B cell (primary cell): ENCODE measurements at regions of chr11 and their contacts with region 1.

Region 1: GRCh38 chr11:110199184-110199941 is 97.1 kb downstream of the RDX start:
- DNase-seq: no peak
- ATAC-seq: no peak
- H3K4me3 ChIP-seq: no peak overlapping the region
- H3K4me3 Mint-ChIP-seq: no peak overlapping the region
- H3K27ac ChIP-seq: no peak overlapping the region
- H3K27ac Mint-ChIP-seq: no peak overlapping the region
- H3K4me1 ChIP-seq: no peaks in the 10 kb centered on the region
- H3K4me1 Mint-ChIP-seq: no peaks in the 10 kb centered on the region
- H3K27me3 ChIP-seq: peaks cover 0 to 16% (median 11%) of the 10 kb centered on the region in 4 experiments
- H3K27me3 Mint-ChIP-seq: peaks cover 38% of the 10 kb centered on the region
- CTCF ChIP-seq: no peak

Region 2: DNA sequence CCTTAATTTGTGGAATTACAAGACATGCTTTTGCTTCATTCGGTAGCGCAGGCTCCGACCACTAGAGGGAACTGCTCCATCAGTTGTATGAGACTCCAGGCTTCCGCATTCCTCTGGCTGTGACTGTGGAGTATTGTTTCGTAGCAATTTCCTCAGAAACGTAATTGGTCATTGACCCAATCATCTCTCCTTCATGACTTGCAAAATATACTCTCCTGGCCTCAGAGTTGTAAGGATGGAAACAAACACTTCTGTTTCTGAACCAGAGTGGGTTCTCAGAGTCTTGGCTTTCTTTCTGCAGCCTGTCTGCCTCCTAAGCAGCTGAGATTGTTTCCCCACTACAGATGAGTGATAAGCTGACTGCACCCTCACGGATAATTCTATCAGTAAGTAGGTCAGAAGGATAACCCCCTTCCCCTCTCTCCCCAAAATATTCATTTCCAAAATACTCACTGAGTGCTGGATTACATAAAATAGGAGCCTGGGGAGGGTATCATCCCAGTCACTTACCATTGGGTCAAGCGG is 253.0 kb before region 1 on chr11:
- CTCF ChIA-PET with region 1: interaction called, 9 read pairs
- POLR2A ChIA-PET with region 1: no interaction called
- intact Hi-C with region 1: loop called (anchors 5 kb)
- DNase-seq: peak; percentile 79
- ATAC-seq: peak; percentile 92
- H3K4me3 ChIP-seq: peak overlapping the region in 3 of 5 experiments; percentile 25 to 50 (median 34)
- H3K4me3 Mint-ChIP-seq: peak overlapping the region; percentile 71
- H3K27ac ChIP-seq: no peak overlapping the region
- H3K27ac Mint-ChIP-seq: no peak overlapping the region
- H3K4me1 ChIP-seq: peaks cover 6 to 9% of the 10 kb centered on the region in 2 donors
- H3K4me1 Mint-ChIP-seq: peaks cover 7% of the 10 kb centered on the region
- H3K27me3 ChIP-seq: peaks cover 0 to 16% (median 1%) of the 10 kb centered on the region in 4 experiments
- H3K27me3 Mint-ChIP-seq: peaks cover 13% of the 10 kb centered on the region
- CTCF ChIP-seq: peak; percentile 88

Region 3: GRCh38 chr11:110019675-110020074 is 179.7 kb before region 1 on chr11:
- CTCF ChIA-PET with region 1: no interaction called
- POLR2A ChIA-PET with region 1: no interaction called
- intact Hi-C with region 1: no loop called
- DNase-seq: no peak
- ATAC-seq: no peak
- H3K4me3 ChIP-seq: no peak overlapping the region
- H3K4me3 Mint-ChIP-seq: no peak overlapping the region
- H3K27ac ChIP-seq: no peak overlapping the region
- H3K27ac Mint-ChIP-seq: no peak overlapping the region
- H3K4me1 ChIP-seq: no peaks in the 10 kb centered on the region
- H3K4me1 Mint-ChIP-seq: no peaks in the 10 kb centered on the region
- H3K27me3 ChIP-seq: peaks cover 0 to 42% (median 39%) of the 10 kb centered on the region in 4 experiments
- H3K27me3 Mint-ChIP-seq: peaks cover 64% of the 10 kb centered on the region
- CTCF ChIP-seq: no peak

Region 4: GRCh38 chr11:110362971-110363509 is 163.7 kb after region 1 on chr11:
- CTCF ChIA-PET with region 1: interaction called, 71 read pairs
- POLR2A ChIA-PET with region 1: no interaction called
- intact Hi-C with region 1: loop called (anchors 1 kb)
- DNase-seq: no peak
- ATAC-seq: no peak
- H3K4me3 ChIP-seq: no peak overlapping the region
- H3K4me3 Mint-ChIP-seq: no peak overlapping the region
- H3K27ac ChIP-seq: no peak overlapping the region
- H3K27ac Mint-ChIP-seq: no peak overlapping the region
- H3K4me1 ChIP-seq: no peaks in the 10 kb centered on the region
- H3K4me1 Mint-ChIP-seq: no peaks in the 10 kb centered on the region
- H3K27me3 ChIP-seq: no peaks in the 10 kb centered on the region
- H3K27me3 Mint-ChIP-seq: peaks cover 5% of the 10 kb centered on the region
- CTCF ChIP-seq: no peak

Region 5: DNA sequence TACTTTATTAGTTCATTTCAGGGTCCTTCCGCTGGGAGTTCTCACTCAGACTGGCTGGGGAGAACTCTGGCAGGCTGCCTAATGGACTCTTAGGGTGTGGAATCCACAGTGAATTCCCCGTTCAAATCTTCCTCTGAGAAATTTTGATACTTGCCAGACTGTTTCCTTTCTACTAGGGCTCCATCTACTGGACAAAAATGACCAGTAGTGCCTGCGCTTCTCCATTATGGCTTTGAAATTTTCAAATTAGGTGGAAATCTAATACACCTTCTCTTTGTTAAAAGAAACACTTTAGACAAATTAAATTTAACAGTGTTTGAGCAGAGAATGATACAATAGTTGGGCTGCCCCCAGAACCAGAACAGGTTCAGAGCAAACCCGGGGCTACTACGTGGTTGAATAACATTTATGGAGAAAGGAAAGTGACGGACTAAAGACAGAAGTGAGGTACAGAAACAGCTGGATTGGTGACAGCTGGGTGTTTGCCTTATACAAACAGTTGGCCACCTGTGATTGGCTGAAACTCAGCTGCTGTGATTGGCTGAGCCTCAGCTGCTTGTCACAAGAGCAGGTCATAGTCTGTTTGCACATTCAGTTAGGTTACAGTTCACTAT is 177.5 kb after region 1 on chr11:
- CTCF ChIA-PET with region 1: interaction called, 52 read pairs
- POLR2A ChIA-PET with region 1: no interaction called
- intact Hi-C with region 1: loop called (anchors 1 kb)
- DNase-seq: peak; percentile 61
- ATAC-seq: peak; percentile 28
- H3K4me3 ChIP-seq: no peak overlapping the region
- H3K4me3 Mint-ChIP-seq: peak overlapping the region; percentile 35
- H3K27ac ChIP-seq: no peak overlapping the region
- H3K27ac Mint-ChIP-seq: no peak overlapping the region
- H3K4me1 ChIP-seq: peaks cover 0 to 3% of the 10 kb centered on the region in 2 donors
- H3K4me1 Mint-ChIP-seq: no peaks in the 10 kb centered on the region
- H3K27me3 ChIP-seq: peaks cover 0 to 3% (median 0%) of the 10 kb centered on the region in 4 experiments
- H3K27me3 Mint-ChIP-seq: peaks cover 3% of the 10 kb centered on the region
- CTCF ChIP-seq: peak; percentile 80

Region 6: DNA sequence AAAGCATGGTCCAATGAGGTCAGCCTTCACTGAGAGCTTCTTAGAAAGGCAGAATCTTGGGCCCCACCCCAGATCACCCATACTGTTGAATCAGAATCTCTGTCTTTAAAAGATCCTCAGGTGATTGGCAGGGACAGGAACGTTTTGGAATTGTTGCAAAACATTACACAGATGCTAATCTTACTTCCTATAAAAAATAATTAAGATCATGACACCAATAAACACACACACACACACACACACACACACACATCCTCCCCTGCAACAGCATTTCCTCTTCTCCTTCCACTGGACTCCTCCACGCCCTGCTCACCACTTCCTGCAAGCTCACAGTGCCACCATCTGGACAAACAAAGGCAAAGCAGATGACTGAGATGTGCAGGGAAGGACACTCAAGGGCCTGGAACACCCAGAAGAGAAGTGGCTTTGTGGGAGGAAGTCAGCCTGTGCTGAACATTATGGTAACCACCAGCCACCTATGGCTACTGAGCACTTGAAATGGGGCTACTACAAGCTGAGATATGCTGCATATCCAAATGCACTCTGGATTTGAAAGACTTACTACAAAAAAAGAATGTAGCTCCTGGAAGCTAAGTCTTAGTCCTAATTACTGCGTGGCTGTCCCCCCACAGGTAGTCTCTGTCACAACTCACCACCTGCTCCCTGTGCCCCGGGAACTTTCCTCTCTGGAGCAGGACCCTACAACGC is 1247.2 kb after region 1 on chr11:
- CTCF ChIA-PET with region 1: interaction called, 10 read pairs
- POLR2A ChIA-PET with region 1: no interaction called
- intact Hi-C with region 1: loop called (anchors 1 kb)
- DNase-seq: peak; percentile 94
- ATAC-seq: peak; percentile 98
- H3K4me3 ChIP-seq: no peak overlapping the region
- H3K4me3 Mint-ChIP-seq: peak overlapping the region; percentile 1
- H3K27ac ChIP-seq: no peak overlapping the region
- H3K27ac Mint-ChIP-seq: peak overlapping the region; percentile 28
- H3K4me1 ChIP-seq: peaks cover 31 to 35% of the 10 kb centered on the region in 2 donors
- H3K4me1 Mint-ChIP-seq: peaks cover 37% of the 10 kb centered on the region
- H3K27me3 ChIP-seq: no peaks in the 10 kb centered on the region
- H3K27me3 Mint-ChIP-seq: peaks cover under 1% of the 10 kb centered on the region
- CTCF ChIP-seq: peak; percentile 74